T-cell (primary cell): ENCODE measurements at regions of chr15 and their contacts with region 1.

Region 1: GRCh38 chr15:59917504-59918157 is 86.5 kb upstream of the FOXB1 start:
- DNase-seq: peak; percentile 19 to 77 (median 52)
- ATAC-seq: peak; percentile 75 to 94 (median 78)
- H3K4me3 ChIP-seq: no peak overlapping the region
- H3K4me3 Mint-ChIP-seq: no peak overlapping the region
- H3K27ac ChIP-seq: no peak overlapping the region
- H3K27ac Mint-ChIP-seq: no peak overlapping the region
- H3K4me1 ChIP-seq: peaks cover 9% of the 10 kb centered on the region in 2 experiments
- H3K4me1 Mint-ChIP-seq: peaks cover 20 to 21% (median 21%) of the 10 kb centered on the region in 3 donors
- H3K27me3 ChIP-seq: peaks cover 0 to 5% of the 10 kb centered on the region in 2 experiments
- H3K27me3 Mint-ChIP-seq: peaks cover 10 to 11% of the 10 kb centered on the region in 2 donors

Region 2: GRCh38 chr15:59751552-59752413 is 165.8 kb before region 1 on chr15:
- CTCF ChIA-PET with region 1: interaction called, 13 to 24 read pairs
- POLR2A ChIA-PET with region 1: no interaction called
- DNase-seq: peak in 8 of 35 experiments; percentile 6 to 80 (median 16)
- ATAC-seq: peak; percentile 93 to 100 (median 96)
- H3K4me3 ChIP-seq: no peak overlapping the region
- H3K4me3 Mint-ChIP-seq: no peak overlapping the region
- H3K27ac ChIP-seq: no peak overlapping the region
- H3K27ac Mint-ChIP-seq: no peak overlapping the region
- H3K4me1 ChIP-seq: peaks cover 3% of the 10 kb centered on the region in 2 experiments
- H3K4me1 Mint-ChIP-seq: peaks cover 8 to 11% (median 8%) of the 10 kb centered on the region in 3 donors
- H3K27me3 ChIP-seq: peaks cover 0 to 2% of the 10 kb centered on the region in 2 experiments
- H3K27me3 Mint-ChIP-seq: peaks cover 3 to 4% of the 10 kb centered on the region in 2 donors

Region 3: DNA sequence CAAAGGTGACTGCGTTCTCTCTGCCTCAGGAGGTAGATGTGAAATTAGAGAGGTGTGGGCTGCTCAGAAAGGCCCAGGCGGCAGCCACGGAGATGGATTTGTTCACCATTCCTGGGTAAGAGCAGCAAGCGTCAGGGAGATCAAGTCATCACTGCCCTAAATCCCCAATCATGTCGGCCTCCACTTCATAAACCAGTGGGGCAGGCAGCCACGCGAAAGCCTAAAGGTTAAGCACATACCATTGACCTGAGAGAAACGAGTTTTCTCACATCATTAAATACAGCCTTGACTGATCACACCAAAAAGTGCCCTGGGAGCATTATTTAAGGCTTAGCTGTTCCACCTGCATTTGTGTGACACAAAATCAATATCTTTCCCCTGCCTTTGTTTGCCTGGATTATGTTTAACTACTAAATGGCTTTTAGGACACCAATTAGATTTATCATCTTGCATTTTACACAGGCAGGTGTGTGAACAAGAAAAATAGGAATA is 35.8 kb after region 1 on chr15:
- CTCF ChIA-PET with region 1: no interaction called
- POLR2A ChIA-PET with region 1: no interaction called
- DNase-seq: no peak
- ATAC-seq: no peak
- H3K4me3 ChIP-seq: no peak overlapping the region
- H3K4me3 Mint-ChIP-seq: no peak overlapping the region
- H3K27ac ChIP-seq: no peak overlapping the region
- H3K27ac Mint-ChIP-seq: no peak overlapping the region
- H3K4me1 ChIP-seq: no peaks in the 10 kb centered on the region
- H3K4me1 Mint-ChIP-seq: no peaks in the 10 kb centered on the region
- H3K27me3 ChIP-seq: peaks cover 0 to 4% of the 10 kb centered on the region in 2 experiments
- H3K27me3 Mint-ChIP-seq: peaks cover 8 to 12% of the 10 kb centered on the region in 2 donors

Region 4: DNA sequence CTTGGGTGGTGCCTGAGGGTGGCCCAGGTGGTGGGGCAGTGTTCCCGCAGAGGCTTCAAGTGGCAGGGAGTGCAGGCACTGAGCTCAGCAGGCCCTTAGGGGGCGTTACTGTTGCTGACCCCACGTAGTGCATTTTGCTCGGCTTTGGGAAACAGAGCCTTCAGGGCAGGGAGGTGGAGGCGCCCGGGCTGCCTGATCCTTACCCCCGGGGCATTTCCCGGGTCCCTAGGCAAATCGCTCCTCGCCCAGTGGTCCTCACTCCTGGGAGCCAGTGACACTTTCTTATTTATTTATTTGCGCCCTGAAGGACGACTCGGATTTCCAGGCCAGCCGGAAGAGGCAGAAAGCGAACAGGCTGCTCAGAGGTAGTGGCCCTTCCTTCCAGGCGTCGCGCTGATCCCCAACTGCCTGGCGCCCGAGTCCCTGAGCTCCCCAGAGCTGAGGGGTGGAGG is 76.3 kb after region 1 on chr15:
- CTCF ChIA-PET with region 1: interaction called, 4 to 12 read pairs
- POLR2A ChIA-PET with region 1: no interaction called
- DNase-seq: no peak
- ATAC-seq: no peak
- H3K4me3 ChIP-seq: no peak overlapping the region
- H3K4me3 Mint-ChIP-seq: no peak overlapping the region
- H3K27ac ChIP-seq: no peak overlapping the region
- H3K27ac Mint-ChIP-seq: peak overlapping the region in 1 of 2 donors; percentile 36
- H3K4me1 ChIP-seq: peaks cover 8 to 33% of the 10 kb centered on the region in 2 experiments
- H3K4me1 Mint-ChIP-seq: peaks cover 25 to 36% (median 31%) of the 10 kb centered on the region in 3 donors
- H3K27me3 ChIP-seq: peaks cover 20 to 55% of the 10 kb centered on the region in 2 experiments
- H3K27me3 Mint-ChIP-seq: peaks cover 65 to 84% of the 10 kb centered on the region in 2 donors